ENCODE measurements at regions of chr19 and their contacts with region 1.

Region 1: DNA sequence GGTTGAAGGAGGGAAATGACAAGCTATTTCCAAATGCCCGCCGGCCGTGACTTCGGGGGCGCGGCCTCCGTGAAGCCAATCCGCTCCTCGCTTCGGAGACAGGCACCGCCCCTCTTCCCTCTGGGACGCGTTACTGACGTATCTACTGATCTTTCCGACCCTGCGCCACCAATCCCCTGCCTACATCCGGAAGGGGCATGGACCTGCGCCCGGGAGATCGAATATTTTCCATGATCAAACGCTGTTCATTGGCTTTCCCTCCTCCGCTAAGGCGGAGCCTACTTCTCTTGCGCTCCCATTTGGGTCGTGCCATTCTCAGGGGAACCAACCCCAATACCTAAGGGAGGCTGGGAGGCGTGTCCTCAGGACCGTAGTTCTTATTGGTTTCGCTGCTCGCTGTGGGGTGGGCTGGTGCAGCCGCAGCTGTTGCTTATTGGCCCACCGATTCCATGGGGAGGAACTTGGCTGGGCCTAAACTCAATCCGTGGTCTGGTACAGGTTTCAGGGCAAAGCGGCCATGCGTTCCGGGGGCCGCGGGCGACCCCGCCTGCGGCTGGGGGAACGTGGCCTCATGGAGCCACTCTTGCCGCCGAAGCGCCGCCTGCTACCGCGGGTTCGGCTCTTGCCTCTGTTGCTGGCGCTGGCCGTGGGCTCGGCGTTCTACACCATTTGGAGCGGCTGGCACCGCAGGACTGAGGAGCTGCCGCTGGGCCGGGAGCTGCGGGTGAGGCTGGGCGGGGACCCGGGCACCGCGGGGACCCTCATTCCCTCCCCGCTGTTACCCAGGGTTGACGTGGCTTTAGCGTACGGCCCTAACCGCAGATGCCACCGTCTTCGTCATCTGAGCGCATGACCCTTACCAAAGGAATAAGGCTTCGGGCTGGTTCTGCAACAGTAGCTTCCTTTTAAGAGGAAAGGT is at the start of gene QPCTL:
- DNase-seq: peak; percentile 99
- ATAC-seq: peak; percentile 95
- H3K4me3 Mint-ChIP-seq: peak within 1 kb of the TSS; percentile 91
- H3K27ac Mint-ChIP-seq: peak within 1 kb of the TSS; percentile 95
- H3K4me1 Mint-ChIP-seq: peaks cover 20% of the 10 kb centered on the region
- H3K27me3 Mint-ChIP-seq: no peaks in the 10 kb centered on the region
- total RNA-seq, gene QPCTL: 6.7 to 8.0 TPM

Region 2: DNA sequence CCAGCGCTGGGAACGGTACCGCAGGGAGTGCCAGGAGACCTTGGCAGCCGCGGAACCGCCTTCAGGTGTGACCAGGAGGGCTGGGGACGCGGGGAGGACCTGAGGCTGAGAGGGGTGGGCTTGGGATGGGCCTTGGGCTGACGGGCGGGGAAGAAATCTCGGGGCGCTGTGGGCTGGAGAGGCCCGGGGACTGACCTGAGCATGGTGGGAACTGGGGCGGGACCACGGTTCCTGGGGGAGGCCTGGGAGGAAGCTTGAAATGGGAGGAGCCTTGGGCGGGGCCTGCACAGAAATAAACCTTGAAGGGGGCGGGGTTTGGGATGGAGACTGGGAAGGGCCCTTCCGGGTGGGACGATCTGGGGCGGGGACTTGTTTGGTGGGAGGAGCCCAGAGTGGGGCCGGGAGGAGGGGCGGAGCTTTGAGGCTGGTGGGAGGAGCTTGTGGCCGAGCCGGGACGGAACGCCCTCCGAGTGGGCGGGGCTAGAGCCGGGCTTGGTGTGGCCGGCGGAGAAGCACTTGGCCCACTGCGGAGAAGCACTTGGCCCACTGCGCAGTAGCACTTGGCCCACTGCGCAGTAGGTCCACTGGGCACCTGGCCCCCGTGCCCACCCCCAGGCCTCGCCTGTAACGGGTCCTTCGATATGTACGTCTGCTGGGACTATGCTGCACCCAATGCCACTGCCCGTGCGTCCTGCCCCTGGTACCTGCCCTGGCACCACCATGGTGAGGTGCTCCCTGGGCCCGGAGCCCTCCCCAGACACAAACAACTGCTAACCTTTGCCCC is 21.6 kb before region 1 on chr19:
- CTCF ChIA-PET with region 1: interaction called, 116 read pairs
- POLR2A ChIA-PET with region 1: no interaction called
- DNase-seq: peak; percentile 81
- ATAC-seq: peak; percentile 40
- H3K4me3 Mint-ChIP-seq: peak overlapping the region; percentile 59
- H3K27ac Mint-ChIP-seq: no peak overlapping the region
- H3K4me1 Mint-ChIP-seq: peaks cover 36% of the 10 kb centered on the region
- H3K27me3 Mint-ChIP-seq: peaks cover 2% of the 10 kb centered on the region

Region 3: DNA sequence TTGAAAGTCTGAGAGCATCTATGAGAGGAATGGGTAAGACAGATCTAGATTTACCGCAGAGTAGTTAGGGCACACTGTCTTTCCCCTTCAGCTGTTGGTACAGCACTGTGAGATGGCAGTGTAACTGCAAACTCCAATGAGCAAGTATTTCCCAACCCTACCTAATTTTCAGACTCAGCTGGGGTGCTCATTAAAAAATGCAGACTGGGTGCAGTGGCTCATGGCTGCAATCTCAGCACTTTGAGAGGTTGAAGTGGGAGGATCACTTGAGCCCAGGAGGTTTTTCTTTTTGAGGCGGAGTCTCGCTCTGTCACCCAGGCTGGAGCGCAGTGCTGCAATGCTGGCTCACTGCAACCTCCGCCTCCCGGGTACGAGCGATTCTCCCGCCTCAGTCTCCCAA is 12.7 kb after region 1 on chr19:
- CTCF ChIA-PET with region 1: interaction called, 43 read pairs
- POLR2A ChIA-PET with region 1: interaction called, 3 read pairs
- DNase-seq: no peak
- ATAC-seq: no peak
- H3K4me3 Mint-ChIP-seq: no peak overlapping the region
- H3K27ac Mint-ChIP-seq: no peak overlapping the region
- H3K4me1 Mint-ChIP-seq: peaks cover 8% of the 10 kb centered on the region
- H3K27me3 Mint-ChIP-seq: no peaks in the 10 kb centered on the region

Region 4: DNA sequence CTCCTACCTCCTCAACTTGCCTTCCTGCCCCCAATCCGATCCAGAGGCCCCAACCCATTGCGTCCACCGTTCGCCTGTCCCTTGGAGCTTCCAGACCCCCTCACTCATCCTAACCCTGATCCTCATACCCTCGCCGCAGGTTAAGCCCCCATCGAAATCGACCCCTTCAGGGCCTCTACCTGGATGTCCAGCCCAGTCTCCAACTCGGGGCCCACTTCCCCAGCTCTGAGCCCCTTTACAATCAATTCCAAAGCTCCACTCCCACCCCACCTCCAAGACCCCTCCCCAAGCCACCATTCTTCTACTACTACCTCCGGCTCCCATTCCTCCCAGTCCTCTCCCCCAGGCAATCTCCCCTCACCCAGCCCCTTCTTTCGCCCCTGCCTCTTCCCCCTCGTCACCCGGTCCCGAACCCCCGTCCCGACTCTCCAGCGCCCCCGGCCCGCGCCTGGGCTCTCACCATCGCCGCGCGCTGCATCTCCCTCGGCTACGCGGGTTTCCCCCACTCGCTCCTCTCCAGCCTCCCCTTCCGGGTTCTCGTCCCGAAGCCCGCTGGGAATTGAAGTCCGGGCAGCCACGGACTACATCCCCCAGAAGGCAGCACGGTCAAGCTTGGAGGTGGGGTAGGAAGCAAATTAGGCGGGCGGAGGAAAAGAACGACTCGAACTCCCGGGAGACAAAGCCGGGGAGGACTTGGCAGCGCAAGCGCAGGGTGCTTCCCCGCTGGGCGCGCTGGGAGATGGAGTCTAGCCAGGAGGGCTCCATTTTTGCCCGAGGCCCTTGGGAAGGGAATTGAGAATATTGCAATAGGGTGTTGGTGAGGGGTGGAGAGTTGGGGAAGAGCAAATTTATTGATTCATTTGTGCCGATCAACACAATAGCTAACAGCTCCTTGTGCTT is 38.2 kb after region 1 on chr19 and contains the start of gene FBXO46:
- CTCF ChIA-PET with region 1: interaction called, 23 read pairs
- POLR2A ChIA-PET with region 1: interaction called, 5 read pairs
- DNase-seq: peak; percentile 97
- ATAC-seq: peak; percentile 99
- H3K4me3 Mint-ChIP-seq: peak within 1 kb of the TSS; percentile 91
- H3K27ac Mint-ChIP-seq: peak within 1 kb of the TSS; percentile 88
- H3K4me1 Mint-ChIP-seq: peaks cover 26% of the 10 kb centered on the region
- H3K27me3 Mint-ChIP-seq: no peaks in the 10 kb centered on the region
- total RNA-seq, gene FBXO46: 32.6 to 33.9 TPM

Region 5: DNA sequence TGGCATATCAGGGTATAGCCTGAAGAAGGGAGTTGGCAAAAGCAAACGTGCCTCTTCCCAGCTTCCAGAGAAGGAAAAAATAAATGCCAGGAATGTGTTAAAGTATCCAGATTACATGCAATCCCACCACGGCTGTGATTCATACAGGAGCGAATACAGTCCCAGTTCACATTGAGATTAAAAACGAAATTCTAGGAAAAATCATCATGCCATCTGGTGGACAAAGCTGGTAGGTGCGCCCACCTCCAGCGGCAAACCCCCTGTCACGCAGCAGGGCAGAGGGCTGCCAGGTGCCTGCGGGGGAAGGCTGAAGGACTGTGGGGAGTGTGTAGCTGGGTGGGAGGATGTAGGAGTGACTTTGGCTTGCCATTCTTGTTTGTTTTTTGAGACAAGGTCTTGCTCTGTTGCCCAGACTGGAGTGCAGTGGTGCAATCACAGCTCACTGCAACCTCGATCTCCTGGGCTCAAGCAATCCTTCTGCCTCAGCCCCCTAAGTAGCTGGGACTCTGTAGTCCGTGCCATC is 106.6 kb after region 1 on chr19:
- CTCF ChIA-PET with region 1: interaction called, 12 read pairs
- POLR2A ChIA-PET with region 1: no interaction called
- DNase-seq: peak; percentile 65
- ATAC-seq: peak; percentile 66
- H3K4me3 Mint-ChIP-seq: no peak overlapping the region
- H3K27ac Mint-ChIP-seq: no peak overlapping the region
- H3K4me1 Mint-ChIP-seq: peaks cover 5% of the 10 kb centered on the region
- H3K27me3 Mint-ChIP-seq: peaks cover 34% of the 10 kb centered on the region

Measured in activated CD8-positive, alpha-beta T cell treated with anti-CD3 and anti-CD28 coated beads, Interleukin-2, amount 10 ng/mL, durations not matched to agents 7 days and 5 days (primary cell).